GM12878 (cell line): ENCODE measurements at regions of chr7 and their contacts with region 1.

Region 1: GRCh38 chr7:116999311-116999710 is 46.0 kb downstream of the ST7 start:
- DNase-seq: no peak
- ATAC-seq: no peak
- H3K4me3 ChIP-seq: no peak overlapping the region
- H3K27ac ChIP-seq: no peak overlapping the region
- H3K4me1 ChIP-seq: no peaks in the 10 kb centered on the region
- H3K27me3 ChIP-seq: no peaks in the 10 kb centered on the region
- CTCF ChIP-seq: no peak
- EP300 ChIP-seq: no peak
- POLR2A ChIP-seq: no peak
- RAD21 ChIP-seq: no peak

Region 2: GRCh38 chr7:116977172-116977571 is 22.1 kb before region 1 on chr7:
- CTCF ChIA-PET with region 1: no interaction called
- POLR2A ChIA-PET with region 1: no interaction called
- RAD21 ChIA-PET with region 1: no interaction called
- SMC1A ChIA-PET with region 1: no interaction called
- in situ Hi-C with region 1: no loop called
- intact Hi-C with region 1: no loop called
- DNase-seq: no peak
- ATAC-seq: no peak
- H3K4me3 ChIP-seq: no peak overlapping the region
- H3K27ac ChIP-seq: no peak overlapping the region
- H3K4me1 ChIP-seq: peaks cover 4% of the 10 kb centered on the region; the same call in 1 of the 2 replicates
- H3K27me3 ChIP-seq: no peaks in the 10 kb centered on the region
- CTCF ChIP-seq: no peak
- EP300 ChIP-seq: no peak
- POLR2A ChIP-seq: no peak
- RAD21 ChIP-seq: no peak

Region 3: GRCh38 chr7:117014673-117015133 is 15.4 kb after region 1 on chr7:
- CTCF ChIA-PET with region 1: interaction called, 5 read pairs
- POLR2A ChIA-PET with region 1: interaction called, 3 read pairs
- RAD21 ChIA-PET with region 1: interaction called, 4 read pairs
- SMC1A ChIA-PET with region 1: interaction called, 54 read pairs
- in situ Hi-C with region 1: no loop called
- intact Hi-C with region 1: no loop called
- DNase-seq: no peak
- ATAC-seq: peak; percentile 52
- H3K4me3 ChIP-seq: peak overlapping the region; percentile 66; the same call in 1 of the 2 replicates
- H3K27ac ChIP-seq: peak overlapping the region; percentile 79
- H3K4me1 ChIP-seq: peaks cover 43% of the 10 kb centered on the region
- H3K27me3 ChIP-seq: no peaks in the 10 kb centered on the region
- CTCF ChIP-seq: no peak
- EP300 ChIP-seq: no peak
- POLR2A ChIP-seq: peak; percentile 51; the same call in 1 of the 2 replicates
- RAD21 ChIP-seq: no peak

Region 4: DNA sequence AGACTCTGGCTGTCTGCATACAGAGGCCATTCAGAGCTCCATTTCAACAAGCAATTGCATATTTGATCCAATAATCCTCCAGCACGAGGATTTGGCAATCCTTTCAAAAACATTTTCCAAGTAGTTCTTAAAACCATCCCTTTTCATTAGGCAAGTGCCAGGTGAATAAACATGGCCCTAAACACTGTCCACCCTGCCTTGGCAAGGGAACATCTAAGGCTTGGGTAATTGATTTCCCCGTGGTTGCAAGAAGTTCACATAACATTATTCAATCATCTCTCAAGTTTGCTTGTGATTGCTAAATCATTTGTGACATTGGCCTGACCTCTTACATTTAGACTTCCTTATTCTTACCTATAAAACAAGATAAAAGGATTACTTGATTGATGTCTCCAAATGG is 698.7 kb after region 1 on chr7:
- CTCF ChIA-PET with region 1: no interaction called
- POLR2A ChIA-PET with region 1: no interaction called
- RAD21 ChIA-PET with region 1: no interaction called
- SMC1A ChIA-PET with region 1: no interaction called
- in situ Hi-C with region 1: no loop called
- intact Hi-C with region 1: no loop called
- DNase-seq: no peak
- ATAC-seq: no peak
- H3K4me3 ChIP-seq: no peak overlapping the region
- H3K27ac ChIP-seq: no peak overlapping the region
- H3K4me1 ChIP-seq: no peaks in the 10 kb centered on the region
- H3K27me3 ChIP-seq: no peaks in the 10 kb centered on the region
- CTCF ChIP-seq: no peak
- EP300 ChIP-seq: no peak
- POLR2A ChIP-seq: no peak
- RAD21 ChIP-seq: no peak